ENCODE measurements at regions of chr1 and their contacts with region 1.

Region 1: DNA sequence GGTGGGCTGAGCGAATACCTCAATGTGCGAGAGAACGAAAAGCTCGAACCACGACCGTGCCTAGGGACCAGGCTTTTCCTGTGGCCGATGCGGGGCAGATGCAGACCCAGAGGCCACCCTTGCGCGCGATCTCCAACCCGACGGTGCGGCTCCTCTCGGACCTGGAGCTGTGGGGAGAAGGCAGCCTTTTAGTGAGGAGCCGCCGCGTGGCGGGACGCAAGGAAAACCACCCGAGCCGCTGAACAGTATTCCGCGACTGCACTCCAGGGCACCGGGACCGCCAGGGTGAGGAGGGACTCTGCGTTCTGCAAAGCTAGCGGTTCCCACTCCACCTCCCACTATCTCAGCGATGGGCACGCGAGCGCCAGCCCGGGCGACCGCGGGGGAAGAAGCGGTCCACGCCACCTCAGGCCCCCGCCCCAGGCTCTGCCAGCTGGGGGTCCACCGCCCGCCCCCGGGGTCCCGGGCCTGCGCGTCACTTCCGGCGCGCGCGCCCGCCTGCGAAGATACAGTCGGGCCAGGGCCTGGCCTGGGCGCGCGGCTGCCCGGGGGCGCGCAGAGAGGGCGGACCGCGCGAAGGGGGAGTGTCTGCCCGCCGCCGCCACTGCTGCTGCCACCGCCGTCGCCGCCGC is 66.5 kb upstream of the PRKACB start:
- DNase-seq: peak; percentile 69
- H3K4me3 Mint-ChIP-seq: peak overlapping the region; percentile 83
- H3K27ac Mint-ChIP-seq: peak overlapping the region; percentile 31
- H3K4me1 Mint-ChIP-seq: peaks cover 10% of the 10 kb centered on the region
- H3K27me3 Mint-ChIP-seq: no peaks in the 10 kb centered on the region

Region 2: DNA sequence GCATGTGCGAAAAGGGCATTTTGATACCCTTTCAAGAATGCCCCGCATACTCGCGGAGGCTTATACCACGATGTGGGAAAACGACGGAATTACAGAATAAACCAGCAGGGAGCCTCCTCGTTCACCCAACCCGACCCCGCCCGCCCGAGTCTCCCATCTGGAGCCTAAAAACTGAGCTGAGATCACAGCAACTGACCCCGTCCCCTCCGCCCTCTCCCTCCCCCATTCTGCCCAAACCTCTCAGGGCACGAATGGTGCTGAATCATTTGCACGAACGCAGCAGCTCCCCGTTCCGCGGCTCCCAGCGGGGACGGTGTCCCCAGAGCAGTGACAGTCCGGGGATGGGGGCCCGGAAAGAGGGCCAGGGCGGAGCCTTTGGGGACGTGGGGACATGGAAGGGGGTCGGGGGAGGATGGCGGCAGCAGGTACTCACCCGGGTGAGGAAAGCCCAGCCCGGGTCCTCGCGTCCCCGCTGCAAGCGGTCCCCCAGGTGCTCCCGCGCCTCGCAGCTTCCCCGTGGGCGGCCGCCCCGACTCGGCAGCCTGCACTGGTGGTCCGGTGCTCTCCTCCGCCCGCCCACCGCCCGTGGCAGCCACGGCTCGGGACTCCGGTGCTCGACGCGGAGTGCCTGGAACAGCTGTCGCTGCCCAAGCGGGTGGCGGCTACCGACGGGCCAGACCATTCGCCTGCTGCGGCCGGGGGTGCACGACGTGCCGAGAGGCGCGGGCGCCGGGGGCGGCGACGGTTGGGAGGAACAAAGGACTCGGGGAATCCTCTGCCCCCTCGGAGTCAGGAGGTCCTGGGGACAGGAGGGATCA is 78.9 kb before region 1 on chr1 and contains the start of gene TTLL7:
- CTCF ChIA-PET with region 1: no interaction called
- intact Hi-C with region 1: loop called (anchors 1 kb)
- DNase-seq: peak; percentile 59
- H3K4me3 Mint-ChIP-seq: peak within 1 kb of the TSS; percentile 74
- H3K27ac Mint-ChIP-seq: no peak within 1 kb of the TSS
- H3K4me1 Mint-ChIP-seq: peaks cover 7% of the 10 kb centered on the region
- H3K27me3 Mint-ChIP-seq: peaks cover 53% of the 10 kb centered on the region
- total RNA-seq, gene TTLL7: not detected

Region 3: GRCh38 chr1:84090447-84091245 is 13.1 kb after region 1 on chr1:
- CTCF ChIA-PET with region 1: interaction called, 3 read pairs
- intact Hi-C with region 1: loop called (anchors 1 kb)
- DNase-seq: peak; percentile 10
- H3K4me3 Mint-ChIP-seq: peak overlapping the region; percentile 58
- H3K27ac Mint-ChIP-seq: peak overlapping the region; percentile 3
- H3K4me1 Mint-ChIP-seq: peaks cover 33% of the 10 kb centered on the region
- H3K27me3 Mint-ChIP-seq: no peaks in the 10 kb centered on the region

Region 4: DNA sequence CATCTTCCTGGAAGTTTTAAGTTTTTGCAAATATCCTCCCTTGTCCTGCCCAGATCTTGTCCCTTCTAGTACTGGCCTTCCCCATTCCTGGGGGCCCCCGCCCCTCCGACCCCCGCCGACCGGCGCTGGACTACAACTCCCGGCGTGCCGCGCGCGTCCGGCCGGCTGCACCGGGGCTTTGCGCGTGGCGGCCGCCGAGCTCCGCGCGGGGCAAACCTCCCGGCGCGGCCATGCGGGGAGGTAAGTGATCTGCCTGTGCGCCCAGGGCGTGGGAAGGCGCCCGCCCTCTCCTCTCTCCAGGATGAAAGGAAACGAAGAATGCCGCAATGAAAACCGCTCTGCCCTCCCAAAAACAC is 220.7 kb after region 1 on chr1:
- CTCF ChIA-PET with region 1: no interaction called
- intact Hi-C with region 1: loop called (anchors 2 kb)
- DNase-seq: peak; percentile 54
- H3K4me3 Mint-ChIP-seq: peak overlapping the region; percentile 81
- H3K27ac Mint-ChIP-seq: peak overlapping the region; percentile 28
- H3K4me1 Mint-ChIP-seq: peaks cover 35% of the 10 kb centered on the region
- H3K27me3 Mint-ChIP-seq: no peaks in the 10 kb centered on the region

Region 5: DNA sequence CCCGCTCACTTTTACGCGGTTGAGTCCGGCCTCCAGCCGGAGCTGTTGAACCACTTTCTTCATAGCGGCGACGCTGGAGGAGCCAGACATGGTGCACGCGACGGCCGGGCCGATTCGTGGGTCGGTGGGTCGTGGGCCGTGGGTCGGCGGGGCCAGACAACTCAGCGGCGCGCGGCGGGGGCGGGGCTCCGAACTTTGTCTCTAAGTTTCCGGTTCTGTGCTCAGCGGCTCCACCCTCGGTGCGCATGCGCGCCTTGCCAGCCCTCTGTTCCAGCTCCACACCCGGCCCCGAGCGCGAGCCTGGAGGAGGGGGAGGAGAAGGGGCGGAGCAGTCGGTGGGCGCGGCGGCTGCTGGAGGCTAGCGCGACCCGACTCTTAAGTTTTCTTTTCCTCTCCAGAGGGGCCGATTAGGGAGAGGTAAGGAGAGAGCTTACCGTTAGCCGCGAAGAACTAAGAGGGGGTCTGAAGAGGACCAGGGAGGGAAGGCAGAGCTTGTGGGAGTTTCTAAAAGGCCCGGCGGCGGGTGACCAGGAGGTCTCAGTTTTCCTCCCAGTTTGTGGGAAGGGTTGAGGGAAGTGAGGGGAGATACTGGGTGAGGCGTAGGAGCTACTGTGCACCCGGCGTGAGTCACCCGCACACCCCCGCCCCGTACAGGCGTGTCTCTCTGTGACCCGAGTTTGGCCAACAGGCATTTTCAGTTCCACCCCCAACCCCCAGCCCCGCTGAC is 428.6 kb after region 1 on chr1 and contains the starts of genes GNG5 and SPATA1:
- CTCF ChIA-PET with region 1: no interaction called
- intact Hi-C with region 1: loop called (anchors 2 kb)
- DNase-seq: peak; percentile 97
- H3K4me3 Mint-ChIP-seq: peak within 1 kb of the TSS; percentile 100
- H3K27ac Mint-ChIP-seq: peak within 1 kb of the TSS; percentile 98
- H3K4me1 Mint-ChIP-seq: peaks cover 27% of the 10 kb centered on the region
- H3K27me3 Mint-ChIP-seq: no peaks in the 10 kb centered on the region
- total RNA-seq, gene GNG5: 128 to 132 TPM
- total RNA-seq, gene SPATA1: 1.8 to 2.7 TPM

Region 6: DNA sequence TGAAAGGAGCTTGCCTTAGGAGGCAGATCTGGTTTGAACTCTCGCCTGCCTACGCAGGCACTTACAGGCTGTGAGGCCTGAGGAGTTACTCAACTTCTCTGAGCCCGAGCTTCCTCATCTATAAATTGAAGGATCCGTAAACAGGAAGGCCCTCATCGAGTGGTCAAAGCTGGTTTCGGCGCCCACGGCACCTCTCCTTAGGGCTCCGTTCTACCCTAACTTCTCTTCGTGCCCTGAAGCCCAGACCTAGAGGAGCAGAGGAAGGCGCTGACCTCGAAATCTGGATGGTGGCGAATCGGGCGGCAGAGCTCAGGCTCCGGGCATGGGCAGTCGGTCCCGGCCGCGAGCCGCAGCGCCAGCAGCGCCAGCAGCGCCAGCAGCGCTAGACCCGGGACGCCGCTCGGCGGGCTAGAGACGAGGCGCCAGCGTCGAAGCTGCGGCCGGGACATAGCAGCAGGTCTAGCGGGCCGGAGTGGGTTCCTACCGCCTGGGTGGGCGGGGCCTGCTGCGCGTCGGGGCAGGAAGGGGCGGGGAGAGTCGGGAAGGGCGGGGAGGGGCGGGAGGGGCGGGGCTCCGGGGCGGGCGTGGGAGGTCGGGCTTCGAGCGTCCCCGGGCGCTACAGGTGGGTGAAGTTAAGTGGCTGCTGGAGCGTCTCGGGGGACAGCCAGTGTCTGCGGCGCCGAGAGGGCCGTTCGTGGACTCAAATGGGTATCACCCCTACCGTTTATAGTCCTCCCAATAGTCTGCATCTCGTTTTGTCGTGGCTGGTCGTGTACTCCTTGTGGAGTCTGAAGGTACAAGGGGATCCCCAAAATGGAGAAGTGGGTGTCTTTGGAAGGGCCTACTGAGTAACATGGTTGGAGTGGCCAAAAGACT is 496.6 kb after region 1 on chr1 and contains the start of gene CTBS:
- CTCF ChIA-PET with region 1: no interaction called
- intact Hi-C with region 1: loop called (anchors 5 kb)
- DNase-seq: peak; percentile 86
- H3K4me3 Mint-ChIP-seq: peak within 1 kb of the TSS; percentile 95
- H3K27ac Mint-ChIP-seq: peak within 1 kb of the TSS; percentile 98
- H3K4me1 Mint-ChIP-seq: peaks cover 28% of the 10 kb centered on the region
- H3K27me3 Mint-ChIP-seq: no peaks in the 10 kb centered on the region
- total RNA-seq, gene CTBS: 21.1 to 21.2 TPM

Measured in activated naive CD4-positive, alpha-beta T cell treated with anti-CD3 and anti-CD28 coated beads for 36 hours (primary cell).